ENCODE measurements at regions of chr19 and their contacts with region 1.

Region 1: GRCh38 chr19:7943444-7944176 is at the start of gene TIMM44:
- DNase-seq: peak; percentile 100
- H3K4me3 Mint-ChIP-seq: peak within 1 kb of the TSS; percentile 89
- H3K27ac Mint-ChIP-seq: peak within 1 kb of the TSS; percentile 96
- H3K4me1 Mint-ChIP-seq: peaks cover 35% of the 10 kb centered on the region
- H3K27me3 Mint-ChIP-seq: no peaks in the 10 kb centered on the region
- total RNA-seq, gene TIMM44: 44.0 to 59.9 TPM

Region 2: DNA sequence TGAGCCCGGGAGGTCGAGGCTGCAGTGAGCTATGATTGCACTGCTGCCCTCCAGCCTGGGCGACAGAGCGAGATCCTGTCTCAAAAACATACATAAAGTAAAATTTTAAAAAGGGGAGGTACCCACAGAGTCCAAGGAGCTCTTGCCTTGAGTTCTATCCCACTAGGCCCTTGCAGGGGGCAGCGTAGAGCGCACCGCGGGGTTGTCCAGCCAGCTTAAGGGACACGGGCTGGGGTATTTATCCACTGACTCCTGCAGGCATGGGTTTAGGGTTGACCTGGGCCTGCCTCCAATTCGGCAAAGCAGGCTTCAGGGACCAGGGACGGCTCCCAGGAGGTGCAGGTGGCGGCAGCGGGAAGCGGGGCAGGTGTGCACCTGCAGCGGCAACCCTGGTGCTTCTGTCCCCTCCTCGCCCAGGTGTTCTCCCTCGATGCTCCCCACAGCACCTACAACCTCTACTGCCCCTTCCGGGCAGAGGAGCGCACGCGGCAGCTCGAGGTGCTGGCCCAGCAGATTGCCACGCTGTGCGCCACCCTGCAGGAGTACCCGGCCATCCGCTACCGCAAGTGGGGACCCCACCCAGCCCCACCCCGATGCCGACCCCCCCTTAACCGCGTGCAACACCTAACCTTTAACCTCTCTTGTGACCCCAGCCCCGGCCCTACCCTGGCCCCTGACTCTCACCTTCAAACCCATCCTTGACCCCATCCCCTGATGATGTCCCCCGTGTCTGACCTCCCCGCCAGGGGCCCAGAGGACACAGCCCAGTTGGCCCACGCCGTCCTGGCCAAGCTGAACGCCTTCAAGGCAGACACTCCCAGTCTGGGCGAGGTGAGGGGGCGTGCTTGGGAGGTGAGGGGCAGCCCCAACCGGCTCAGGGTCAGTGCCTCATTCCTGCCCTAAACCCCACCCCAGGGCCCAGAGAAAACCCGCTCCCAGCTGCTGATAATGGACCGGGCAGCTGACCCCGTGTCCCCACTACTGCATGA is 302.0 kb before region 1 on chr19:
- CTCF ChIA-PET with region 1: no interaction called
- POLR2A ChIA-PET with region 1: no interaction called
- DNase-seq: no peak
- H3K4me3 Mint-ChIP-seq: no peak overlapping the region
- H3K27ac Mint-ChIP-seq: no peak overlapping the region
- H3K4me1 Mint-ChIP-seq: peaks cover 26% of the 10 kb centered on the region
- H3K27me3 Mint-ChIP-seq: no peaks in the 10 kb centered on the region

Region 3: GRCh38 chr19:7919610-7920518 is 23.7 kb before region 1 on chr19 and contains the start of gene SNAPC2:
- CTCF ChIA-PET with region 1: interaction called, 14 read pairs
- POLR2A ChIA-PET with region 1: interaction called, 3 read pairs
- DNase-seq: peak; percentile 97
- H3K4me3 Mint-ChIP-seq: peak within 1 kb of the TSS; percentile 87
- H3K27ac Mint-ChIP-seq: peak within 1 kb of the TSS; percentile 94
- H3K4me1 Mint-ChIP-seq: peaks cover 38% of the 10 kb centered on the region
- H3K27me3 Mint-ChIP-seq: peaks cover 35% of the 10 kb centered on the region
- total RNA-seq, gene SNAPC2: 18.6 to 19.1 TPM

Region 4: GRCh38 chr19:7928736-7929701 is 14.6 kb before region 1 on chr19:
- CTCF ChIA-PET with region 1: interaction called, 38 read pairs
- POLR2A ChIA-PET with region 1: no interaction called
- DNase-seq: peak; percentile 68
- H3K4me3 Mint-ChIP-seq: no peak overlapping the region
- H3K27ac Mint-ChIP-seq: peak overlapping the region; percentile 54
- H3K4me1 Mint-ChIP-seq: peaks cover 8% of the 10 kb centered on the region
- H3K27me3 Mint-ChIP-seq: no peaks in the 10 kb centered on the region

Region 5: GRCh38 chr19:7970716-7971448 is 27.3 kb after region 1 on chr19:
- CTCF ChIA-PET with region 1: interaction called, 13 read pairs
- POLR2A ChIA-PET with region 1: interaction called, 3 read pairs
- DNase-seq: peak; percentile 44
- H3K4me3 Mint-ChIP-seq: no peak overlapping the region
- H3K27ac Mint-ChIP-seq: peak overlapping the region; percentile 50
- H3K4me1 Mint-ChIP-seq: peaks cover 3% of the 10 kb centered on the region
- H3K27me3 Mint-ChIP-seq: no peaks in the 10 kb centered on the region

Region 6: DNA sequence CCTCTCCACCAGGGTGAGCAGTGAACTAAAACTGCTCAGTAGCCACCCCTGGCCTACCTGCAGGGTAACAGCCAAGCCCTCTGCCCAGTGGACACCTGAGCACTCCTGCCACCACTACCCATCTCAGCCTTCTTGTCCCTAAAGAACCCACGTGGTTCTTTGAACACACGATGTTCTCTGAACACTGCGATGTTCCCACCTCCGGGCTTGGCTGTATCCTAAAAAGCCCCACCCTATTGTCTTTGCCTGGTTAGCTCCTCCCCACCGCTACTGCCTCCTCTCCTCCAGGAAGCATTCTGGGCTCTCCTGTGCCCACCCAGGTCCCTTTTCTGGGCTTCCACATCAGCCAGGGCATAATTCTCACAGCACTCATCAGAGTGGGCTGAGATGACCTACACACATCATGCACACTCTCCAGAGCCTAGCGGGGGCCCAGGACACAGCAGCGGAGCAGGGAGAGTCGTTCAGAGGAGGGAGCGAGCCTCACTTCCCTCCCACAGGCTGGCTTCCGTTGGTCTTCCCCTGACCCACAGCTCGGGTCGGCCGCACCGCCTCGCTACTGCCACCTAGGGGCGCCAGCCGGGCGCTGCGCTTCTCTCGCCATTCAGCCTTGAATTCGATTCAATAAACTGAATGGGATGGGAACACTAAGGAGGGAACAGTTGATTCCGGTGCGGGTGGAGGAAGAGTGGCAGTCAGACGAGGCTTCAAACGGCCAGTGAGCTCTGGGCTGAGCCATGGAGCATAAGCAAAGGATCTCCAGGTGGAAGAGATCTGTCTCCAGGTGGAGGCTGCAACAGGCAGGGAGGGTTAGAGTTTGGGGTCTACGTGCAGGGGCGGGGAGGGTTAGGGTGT is 58.6 kb after region 1 on chr19:
- CTCF ChIA-PET with region 1: interaction called, 11 read pairs
- POLR2A ChIA-PET with region 1: no interaction called
- DNase-seq: peak; percentile 74
- H3K4me3 Mint-ChIP-seq: peak overlapping the region; percentile 59
- H3K27ac Mint-ChIP-seq: peak overlapping the region; percentile 69
- H3K4me1 Mint-ChIP-seq: peaks cover 50% of the 10 kb centered on the region
- H3K27me3 Mint-ChIP-seq: no peaks in the 10 kb centered on the region